ENCODE measurements at regions of chrX and their contacts with region 1.

Region 1: GRCh38 chrX:71181910-71182799 is 37.5 kb downstream of the NLGN3 start:
- DNase-seq: peak; percentile 82
- ATAC-seq: peak; percentile 95
- H3K4me3 ChIP-seq: peak overlapping the region; percentile 61
- H3K27ac ChIP-seq: peak overlapping the region; percentile 93
- H3K4me1 ChIP-seq: no peaks in the 10 kb centered on the region
- H3K27me3 ChIP-seq: no peaks in the 10 kb centered on the region
- CTCF ChIP-seq: no peak
- EP300 ChIP-seq: no peak
- POLR2A ChIP-seq: peak; percentile 80
- RAD21 ChIP-seq: no peak

Region 2: GRCh38 chrX:70970482-70970995 is 211.6 kb before region 1 on chrX:
- CTCF ChIA-PET with region 1: interaction called, 5 read pairs
- POLR2A ChIA-PET with region 1: no interaction called
- RAD21 ChIA-PET with region 1: interaction called, 6 read pairs
- SMC1A ChIA-PET with region 1: interaction called, 5 read pairs
- in situ Hi-C with region 1: no loop called
- intact Hi-C with region 1: loop called (anchors 2 kb)
- DNase-seq: no peak
- ATAC-seq: 0 out of 3 replicates have a peak, but pooled peaks have one; percentile 26
- H3K4me3 ChIP-seq: no peak overlapping the region
- H3K27ac ChIP-seq: no peak overlapping the region
- H3K4me1 ChIP-seq: no peaks in the 10 kb centered on the region
- H3K27me3 ChIP-seq: no peaks in the 10 kb centered on the region
- CTCF ChIP-seq: peak in 2 of 3 experiments; percentile 10 to 30; a peak in 1 of 6 replicates
- EP300 ChIP-seq: no peak
- POLR2A ChIP-seq: no peak
- RAD21 ChIP-seq: peak; percentile 50

Region 3: GRCh38 chrX:71095543-71095911 is 86.6 kb before region 1 on chrX and contains the start of gene FOXO4:
- CTCF ChIA-PET with region 1: interaction called, 55 read pairs
- POLR2A ChIA-PET with region 1: interaction called, 4 read pairs
- RAD21 ChIA-PET with region 1: interaction called, 6 read pairs
- SMC1A ChIA-PET with region 1: interaction called, 13 read pairs
- in situ Hi-C with region 1: no loop called
- intact Hi-C with region 1: loop called (anchors 1 kb)
- DNase-seq: no peak
- ATAC-seq: peak; percentile 92
- H3K4me3 ChIP-seq: peak within 1 kb of the TSS; percentile 69
- H3K27ac ChIP-seq: peak within 1 kb of the TSS; percentile 24; the same call in 1 of the 2 replicates
- H3K4me1 ChIP-seq: no peaks in the 10 kb centered on the region
- H3K27me3 ChIP-seq: no peaks in the 10 kb centered on the region
- CTCF ChIP-seq: no peak
- EP300 ChIP-seq: no peak
- POLR2A ChIP-seq: peak; percentile 52; the same call in 1 of the 2 replicates
- RAD21 ChIP-seq: no peak
- polyA plus RNA-seq, gene FOXO4: 0.05 to 0.11 TPM

Region 4: GRCh38 chrX:71111141-71111843 is 70.9 kb before region 1 on chrX and contains the start of gene IL2RG:
- CTCF ChIA-PET with region 1: interaction called, 10 read pairs
- POLR2A ChIA-PET with region 1: interaction called, 27 read pairs
- RAD21 ChIA-PET with region 1: interaction called, 3 read pairs
- SMC1A ChIA-PET with region 1: interaction called, 3 read pairs
- in situ Hi-C with region 1: no loop called
- intact Hi-C with region 1: no loop called
- DNase-seq: peak; percentile 87
- ATAC-seq: peak; percentile 88
- H3K4me3 ChIP-seq: peak within 1 kb of the TSS; percentile 84
- H3K27ac ChIP-seq: peak within 1 kb of the TSS; percentile 82
- H3K4me1 ChIP-seq: peaks cover 11% of the 10 kb centered on the region
- H3K27me3 ChIP-seq: no peaks in the 10 kb centered on the region
- CTCF ChIP-seq: no peak
- EP300 ChIP-seq: peak in 1 of 2 experiments; percentile 62; a peak in 1 of 4 replicates
- POLR2A ChIP-seq: peak; percentile 91
- RAD21 ChIP-seq: no peak
- polyA plus RNA-seq, gene IL2RG: 135 to 138 TPM

Region 5: DNA sequence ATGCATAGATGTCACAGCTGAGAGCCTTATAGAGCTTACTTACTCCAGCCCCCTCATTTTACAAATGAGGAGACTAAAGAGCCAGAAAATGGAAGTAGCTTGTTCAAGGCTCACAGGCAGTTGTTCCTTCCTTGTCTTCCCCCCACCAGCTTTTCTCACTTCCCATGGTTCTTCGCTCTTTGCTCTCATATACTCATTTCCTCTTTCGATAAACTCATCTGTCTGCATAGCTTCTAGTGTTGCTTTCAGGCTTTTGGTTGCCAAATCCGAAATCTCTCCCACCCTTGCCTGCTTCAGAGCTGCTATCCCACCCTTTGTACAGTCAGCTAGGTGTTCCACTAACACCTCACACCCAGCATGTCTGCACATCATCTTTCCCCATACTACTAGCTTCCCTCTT is 15.9 kb after region 1 on chrX:
- CTCF ChIA-PET with region 1: interaction called, 31 read pairs
- POLR2A ChIA-PET with region 1: interaction called, 76 read pairs
- RAD21 ChIA-PET with region 1: interaction called, 49 read pairs
- SMC1A ChIA-PET with region 1: interaction called, 43 read pairs
- in situ Hi-C with region 1: no loop called
- intact Hi-C with region 1: no loop called
- DNase-seq: peak; percentile 56
- ATAC-seq: peak; percentile 85
- H3K4me3 ChIP-seq: peak overlapping the region; percentile 69
- H3K27ac ChIP-seq: peak overlapping the region; percentile 72
- H3K4me1 ChIP-seq: no peaks in the 10 kb centered on the region
- H3K27me3 ChIP-seq: no peaks in the 10 kb centered on the region
- CTCF ChIP-seq: no peak
- EP300 ChIP-seq: no peak
- POLR2A ChIP-seq: no peak
- RAD21 ChIP-seq: no peak

Region 6: DNA sequence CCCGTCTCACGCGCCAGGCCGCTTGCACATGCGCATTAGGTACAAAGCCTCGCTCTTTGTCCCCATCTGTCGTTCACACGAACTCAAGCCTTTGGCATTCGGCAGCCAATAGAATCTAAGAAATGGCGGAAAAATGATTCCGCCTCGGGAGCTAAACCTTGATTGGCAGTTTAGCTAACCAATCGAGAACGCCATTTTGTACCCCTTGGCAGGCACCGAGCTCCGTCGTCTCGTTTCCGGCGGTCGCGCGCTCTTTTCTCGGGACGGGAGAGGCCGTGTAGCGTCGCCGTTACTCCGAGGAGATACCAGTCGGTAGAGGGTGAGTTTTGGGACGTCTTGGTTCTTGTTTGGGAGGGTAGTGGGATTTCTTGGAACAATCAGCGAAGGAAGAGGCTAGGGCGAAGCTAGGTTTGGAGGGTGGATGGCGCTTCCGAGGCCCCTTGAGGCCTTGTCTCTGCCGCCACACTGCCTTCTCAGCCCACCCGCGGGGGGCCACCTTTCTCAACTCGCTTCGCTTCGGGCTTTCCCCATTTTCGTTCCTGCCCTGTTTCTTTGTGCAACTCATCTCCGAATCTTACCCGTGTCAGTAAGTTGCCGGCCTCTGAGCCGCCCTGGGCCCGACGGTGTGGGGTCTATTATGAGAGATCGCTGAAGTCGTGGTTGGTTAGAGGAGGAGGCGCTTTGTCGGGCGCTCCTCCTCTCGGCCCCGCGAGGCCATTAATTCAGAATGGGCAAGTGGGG is 101.4 kb after region 1 on chrX and contains the start of gene NONO:
- CTCF ChIA-PET with region 1: no interaction called
- POLR2A ChIA-PET with region 1: interaction called, 9 read pairs
- RAD21 ChIA-PET with region 1: interaction called, 13 read pairs
- SMC1A ChIA-PET with region 1: interaction called, 8 read pairs
- in situ Hi-C with region 1: no loop called
- intact Hi-C with region 1: loop called (anchors 1 kb)
- DNase-seq: peak; percentile 90
- ATAC-seq: peak; percentile 85
- H3K4me3 ChIP-seq: peak within 1 kb of the TSS; percentile 78
- H3K27ac ChIP-seq: peak within 1 kb of the TSS; percentile 91
- H3K4me1 ChIP-seq: peaks cover 4% of the 10 kb centered on the region
- H3K27me3 ChIP-seq: no peaks in the 10 kb centered on the region
- CTCF ChIP-seq: peak in 1 of 3 experiments; percentile 20; a peak in 1 of 6 replicates
- EP300 ChIP-seq: no peak
- POLR2A ChIP-seq: peak; percentile 88
- RAD21 ChIP-seq: no peak
- polyA plus RNA-seq, gene NONO: 206 to 359 TPM